Dorsolateral prefrontal cortex (tissue), 120 donors: ENCODE measurements at regions of chr9 and their contacts with region 1.

Region 1: DNA sequence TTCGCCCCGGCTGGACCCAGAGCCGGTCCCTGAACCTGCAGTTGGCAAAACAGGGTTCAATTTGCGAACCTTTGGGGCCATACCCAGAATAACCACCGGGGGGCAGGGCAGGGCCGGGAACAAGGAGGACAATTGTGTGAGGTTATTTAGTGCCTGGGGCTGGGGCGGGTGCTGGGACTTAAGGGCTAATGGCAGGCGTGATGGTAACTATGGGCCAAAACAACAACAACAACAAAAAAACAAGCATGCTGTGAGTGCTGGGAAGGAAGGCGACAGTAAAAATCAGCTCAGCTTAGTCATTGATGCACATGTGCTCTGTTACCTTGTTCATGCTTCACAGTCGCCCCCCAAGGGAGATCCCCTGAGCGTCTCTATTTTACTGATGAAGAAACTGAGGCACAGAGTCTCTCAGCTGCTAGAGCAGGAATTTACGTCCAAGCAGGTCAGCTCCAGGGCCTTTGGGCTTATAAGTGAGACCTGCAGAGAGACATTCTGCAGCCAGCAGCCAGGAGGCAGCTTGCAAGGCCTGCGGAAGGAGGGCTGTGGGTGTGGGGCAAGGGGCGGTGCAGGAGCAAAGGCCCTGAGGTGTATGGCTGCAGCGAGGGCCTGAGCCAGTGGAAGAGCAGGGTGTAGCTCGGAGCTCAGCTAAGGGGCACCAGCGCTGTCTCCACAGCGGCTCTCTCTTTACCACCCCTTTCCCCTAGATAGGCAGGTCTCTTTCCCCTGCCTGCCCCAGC is 106.0 kb downstream of the PHF2 start:
- DNase-seq: peak in 9 of 10 donors; percentile 34 to 76 (median 52)
- H3K4me3 ChIP-seq: no peak overlapping the region
- H3K27ac ChIP-seq: no peak overlapping the region
- H3K27me3 ChIP-seq: no peaks in the 10 kb centered on the region
- CTCF ChIP-seq: peak; percentile 53 to 83 (median 73)

Region 2: GRCh38 chr9:93108291-93109041 is 573.9 kb before region 1 on chr9:
- intact Hi-C with region 1: no loop called
- DNase-seq: peak in 5 of 10 donors; percentile 2 to 39 (median 38)
- H3K4me3 ChIP-seq: no peak overlapping the region
- H3K27ac ChIP-seq: no peak overlapping the region
- H3K27me3 ChIP-seq: no peaks in the 10 kb centered on the region
- CTCF ChIP-seq: no peak

Region 3: GRCh38 chr9:93962561-93963440 is 280.4 kb after region 1 on chr9:
- intact Hi-C with region 1: loop called (anchors 2 to 5 kb)
- DNase-seq: peak in 9 of 10 donors; percentile 59 to 81 (median 77)
- H3K4me3 ChIP-seq: peak overlapping the region in 24 of 59 donors; percentile 0 to 55 (median 34)
- H3K27ac ChIP-seq: no peak overlapping the region
- H3K27me3 ChIP-seq: peaks cover 5 to 62% (median 45%) of the 10 kb centered on the region in 45 donors
- CTCF ChIP-seq: peak; percentile 54 to 94 (median 87)